ENCODE measurements at regions of chr16 and their contacts with region 1.

Region 1: GRCh38 chr16:86424398-86425367 is 85.6 kb upstream of the FOXF1 start:
- DNase-seq: no peak
- H3K4me3 ChIP-seq: no peak overlapping the region
- H3K27ac ChIP-seq: no peak overlapping the region
- H3K4me1 ChIP-seq: no peaks in the 10 kb centered on the region
- H3K27me3 ChIP-seq: peaks cover 46% of the 10 kb centered on the region
- CTCF ChIP-seq: no peak

Region 2: DNA sequence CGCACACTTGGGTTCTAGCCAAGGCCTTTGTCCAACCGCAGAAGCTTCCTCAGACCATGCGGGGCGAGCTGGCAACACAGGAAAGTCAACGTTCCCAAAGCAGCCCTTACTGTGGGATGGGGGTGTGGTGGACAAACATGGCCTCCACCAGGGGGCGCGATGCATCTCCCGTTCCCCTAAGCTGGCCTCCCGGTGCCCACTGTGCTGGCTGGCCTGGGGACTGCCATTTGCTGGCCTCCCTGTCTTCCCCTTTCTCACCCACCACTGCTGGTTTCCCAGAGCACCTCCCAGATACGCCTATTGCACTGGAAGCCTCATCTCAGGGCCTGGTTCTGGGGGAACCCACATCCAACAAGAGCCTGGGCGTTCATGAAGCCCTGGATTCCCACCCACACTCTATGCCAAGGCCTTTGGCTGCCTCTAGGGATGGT is 380.4 kb before region 1 on chr16:
- CTCF ChIA-PET with region 1: interaction called, 10 read pairs
- POLR2A ChIA-PET with region 1: no interaction called
- intact Hi-C with region 1: no loop called
- DNase-seq: peak; percentile 64
- H3K4me3 ChIP-seq: no peak overlapping the region
- H3K27ac ChIP-seq: no peak overlapping the region
- H3K4me1 ChIP-seq: no peaks in the 10 kb centered on the region
- H3K27me3 ChIP-seq: peaks cover 58% of the 10 kb centered on the region
- CTCF ChIP-seq: peak; percentile 83

Region 3: DNA sequence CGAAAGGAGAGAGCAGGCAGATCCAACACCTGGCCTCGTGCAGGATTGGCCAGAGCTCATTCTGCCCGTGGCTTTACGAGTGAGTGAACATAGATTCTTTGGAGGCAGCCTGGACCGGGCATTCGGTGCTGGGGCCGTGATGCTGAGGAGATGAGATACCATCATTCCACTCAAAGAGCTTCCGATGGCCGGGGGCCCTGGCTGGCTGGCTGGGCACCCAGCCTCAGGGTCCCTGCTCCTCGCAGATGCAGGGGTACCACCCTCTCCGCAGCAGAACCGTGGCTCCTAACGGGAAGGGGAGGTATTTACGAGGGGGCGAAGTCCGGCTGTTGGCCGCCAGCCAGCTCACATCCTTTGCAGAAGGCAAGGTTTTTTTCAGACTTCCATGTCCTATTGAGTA is 19.6 kb after region 1 on chr16:
- CTCF ChIA-PET with region 1: no interaction called
- POLR2A ChIA-PET with region 1: no interaction called
- intact Hi-C with region 1: no loop called
- DNase-seq: no peak
- H3K4me3 ChIP-seq: no peak overlapping the region
- H3K27ac ChIP-seq: no peak overlapping the region
- H3K4me1 ChIP-seq: no peaks in the 10 kb centered on the region
- H3K27me3 ChIP-seq: peaks cover 80% of the 10 kb centered on the region
- CTCF ChIP-seq: no peak

Region 4: GRCh38 chr16:86563489-86564345 is 139.0 kb after region 1 on chr16:
- CTCF ChIA-PET with region 1: no interaction called
- POLR2A ChIA-PET with region 1: no interaction called
- intact Hi-C with region 1: no loop called
- DNase-seq: peak; percentile 88
- H3K4me3 ChIP-seq: peak overlapping the region; percentile 16
- H3K27ac ChIP-seq: no peak overlapping the region
- H3K4me1 ChIP-seq: peaks cover 4% of the 10 kb centered on the region
- H3K27me3 ChIP-seq: peaks cover 43% of the 10 kb centered on the region
- CTCF ChIP-seq: peak; percentile 100